ENCODE measurements at regions of chr2 and their contacts with region 1.

Region 1: DNA sequence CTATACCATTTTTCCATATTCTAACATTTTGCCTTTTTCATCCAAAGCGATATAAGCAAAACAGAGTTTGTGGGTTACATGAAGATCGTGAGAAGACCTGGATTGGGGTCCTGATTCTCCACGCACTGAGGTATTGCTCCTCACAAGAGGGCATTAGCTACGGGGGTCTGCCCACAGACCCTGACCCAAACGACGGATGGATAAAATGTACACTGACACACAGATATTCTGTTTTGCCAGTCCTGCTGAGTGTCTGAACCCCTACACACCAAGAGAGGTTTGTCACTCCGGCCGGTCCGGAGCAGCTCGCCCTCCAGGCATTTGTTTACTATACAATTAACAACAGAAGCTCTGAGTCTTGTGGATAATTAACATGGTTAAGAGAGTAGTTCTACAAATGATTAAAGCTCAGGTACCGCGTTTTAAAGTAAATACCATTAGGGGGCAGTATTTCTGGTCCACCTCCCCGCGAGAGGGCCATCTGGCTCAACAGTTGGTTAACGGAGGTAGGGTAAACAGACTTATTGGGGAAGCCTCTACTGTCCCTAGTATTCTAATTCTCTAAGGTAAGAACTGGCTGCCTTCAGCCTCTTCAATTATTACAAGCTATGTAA is 28.4 kb downstream of the SCYGR8 start:
- DNase-seq: peak; percentile 23
- H3K4me3 Mint-ChIP-seq: no peak overlapping the region
- H3K27ac Mint-ChIP-seq: no peak overlapping the region
- H3K4me1 Mint-ChIP-seq: peaks cover 10% of the 10 kb centered on the region
- H3K27me3 Mint-ChIP-seq: no peaks in the 10 kb centered on the region

Region 2: DNA sequence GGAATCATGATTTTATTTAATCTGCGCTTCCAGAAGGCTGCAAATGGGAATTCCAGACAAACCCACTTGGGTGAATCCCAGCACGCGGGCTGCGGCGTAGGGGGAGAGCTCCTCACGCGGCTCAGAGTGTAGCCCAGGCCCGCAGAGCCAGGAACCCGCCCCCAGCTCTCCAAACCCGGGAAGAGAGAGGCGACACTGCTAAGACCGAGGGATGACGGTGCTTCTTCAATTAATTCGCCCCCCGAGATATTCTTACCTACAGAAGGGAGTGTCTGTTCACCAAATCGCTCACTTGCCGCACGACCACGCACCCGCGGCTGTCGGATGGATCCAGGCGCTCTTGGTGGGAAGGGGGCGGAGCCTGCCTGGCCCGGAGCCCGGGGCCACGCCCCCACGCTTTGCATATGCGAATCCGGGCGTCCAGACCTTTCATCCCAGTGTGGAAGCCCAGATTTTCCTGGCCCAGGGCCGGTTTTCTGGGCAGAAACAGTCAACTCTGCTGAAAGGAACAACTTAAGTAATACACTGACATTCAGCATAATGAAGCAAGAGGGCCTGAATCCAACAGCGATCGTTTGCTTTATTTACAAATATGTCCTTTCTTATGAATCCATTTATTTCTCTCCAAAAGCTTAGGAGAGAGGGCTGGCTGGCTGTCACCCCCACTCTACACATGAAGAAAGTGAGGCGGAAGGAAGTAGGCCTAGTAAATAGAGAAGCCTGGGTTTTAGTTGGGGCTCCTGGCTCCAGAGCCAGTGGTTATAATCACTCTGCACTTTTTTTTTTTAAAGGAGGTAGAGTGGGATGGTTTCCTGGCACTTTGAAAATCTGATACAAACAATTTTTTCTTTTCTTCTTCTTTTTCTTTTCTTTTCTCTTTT is 56.2 kb before region 1 on chr2 and contains the start of gene SLC19A3:
- CTCF ChIA-PET with region 1: no interaction called
- POLR2A ChIA-PET with region 1: no interaction called
- DNase-seq: no peak
- H3K4me3 Mint-ChIP-seq: no peak within 1 kb of the TSS
- H3K27ac Mint-ChIP-seq: no peak within 1 kb of the TSS
- H3K4me1 Mint-ChIP-seq: no peaks in the 10 kb centered on the region
- H3K27me3 Mint-ChIP-seq: peaks cover 11% of the 10 kb centered on the region
- total RNA-seq, gene SLC19A3: not detected

Region 3: GRCh38 chr2:227789803-227790202 is 15.7 kb after region 1 on chr2:
- CTCF ChIA-PET with region 1: no interaction called
- POLR2A ChIA-PET with region 1: no interaction called
- DNase-seq: no peak
- H3K4me3 Mint-ChIP-seq: no peak overlapping the region
- H3K27ac Mint-ChIP-seq: no peak overlapping the region
- H3K4me1 Mint-ChIP-seq: peaks cover 11% of the 10 kb centered on the region
- H3K27me3 Mint-ChIP-seq: peaks cover 6% of the 10 kb centered on the region

Region 4: GRCh38 chr2:227862227-227862740 is 88.2 kb after region 1 on chr2:
- CTCF ChIA-PET with region 1: interaction called, 24 read pairs
- POLR2A ChIA-PET with region 1: no interaction called
- DNase-seq: peak; percentile 25
- H3K4me3 Mint-ChIP-seq: no peak overlapping the region
- H3K27ac Mint-ChIP-seq: no peak overlapping the region
- H3K4me1 Mint-ChIP-seq: no peaks in the 10 kb centered on the region
- H3K27me3 Mint-ChIP-seq: no peaks in the 10 kb centered on the region

Region 5: GRCh38 chr2:228016402-228016801 is 242.3 kb after region 1 on chr2:
- CTCF ChIA-PET with region 1: no interaction called
- POLR2A ChIA-PET with region 1: no interaction called
- DNase-seq: no peak
- H3K4me3 Mint-ChIP-seq: no peak overlapping the region
- H3K27ac Mint-ChIP-seq: no peak overlapping the region
- H3K4me1 Mint-ChIP-seq: no peaks in the 10 kb centered on the region
- H3K27me3 Mint-ChIP-seq: no peaks in the 10 kb centered on the region